Naive thymus-derived CD4-positive, alpha-beta T cell (primary cell): ENCODE measurements at regions of chr13 and their contacts with region 1.

Region 1: GRCh38 chr13:112443995-112444860 is 68.1 kb downstream of the SPACA7 start:
- DNase-seq: peak in 4 of 9 donors; percentile 5 to 67 (median 12)
- ATAC-seq: peak; percentile 48
- H3K4me3 ChIP-seq: no peak overlapping the region
- H3K4me3 Mint-ChIP-seq: no peak overlapping the region
- H3K27ac ChIP-seq: no peak overlapping the region
- H3K27ac Mint-ChIP-seq: no peak overlapping the region
- H3K4me1 ChIP-seq: no peaks in the 10 kb centered on the region
- H3K4me1 Mint-ChIP-seq: peaks cover 0 to 7% (median 0%) of the 10 kb centered on the region in 7 donors
- H3K27me3 ChIP-seq: no peaks in the 10 kb centered on the region
- H3K27me3 Mint-ChIP-seq: peaks cover 9 to 50% (median 32%) of the 10 kb centered on the region in 5 donors

Region 2: GRCh38 chr13:110455941-110456340 is 1988.3 kb before region 1 on chr13:
- CTCF ChIA-PET with region 1: no interaction called
- POLR2A ChIA-PET with region 1: no interaction called
- intact Hi-C with region 1: loop called in 1 of 2 experiments (anchors 10 kb)
- DNase-seq: peak; percentile 21 to 58 (median 44)
- ATAC-seq: peak; percentile 87
- H3K4me3 ChIP-seq: no peak overlapping the region
- H3K4me3 Mint-ChIP-seq: peak overlapping the region in 9 of 10 donors; percentile 3 to 74 (median 45)
- H3K27ac ChIP-seq: no peak overlapping the region
- H3K27ac Mint-ChIP-seq: no peak overlapping the region
- H3K4me1 ChIP-seq: no peaks in the 10 kb centered on the region
- H3K4me1 Mint-ChIP-seq: peaks cover 2 to 6% (median 5%) of the 10 kb centered on the region in 7 donors
- H3K27me3 ChIP-seq: no peaks in the 10 kb centered on the region
- H3K27me3 Mint-ChIP-seq: peaks cover 14 to 29% (median 19%) of the 10 kb centered on the region in 5 donors

Region 3: GRCh38 chr13:111474136-111475002 is 969.9 kb before region 1 on chr13:
- CTCF ChIA-PET with region 1: no interaction called
- POLR2A ChIA-PET with region 1: no interaction called
- intact Hi-C with region 1: loop called in 1 of 2 experiments (anchors 5 kb)
- DNase-seq: peak in 2 of 9 donors; percentile 5 to 12
- ATAC-seq: no peak
- H3K4me3 ChIP-seq: no peak overlapping the region
- H3K4me3 Mint-ChIP-seq: no peak overlapping the region
- H3K27ac ChIP-seq: no peak overlapping the region
- H3K27ac Mint-ChIP-seq: no peak overlapping the region
- H3K4me1 ChIP-seq: no peaks in the 10 kb centered on the region
- H3K4me1 Mint-ChIP-seq: no peaks in the 10 kb centered on the region
- H3K27me3 ChIP-seq: no peaks in the 10 kb centered on the region
- H3K27me3 Mint-ChIP-seq: peaks cover 0 to 9% (median 0%) of the 10 kb centered on the region in 5 donors

Region 4: GRCh38 chr13:112606109-112607001 is 162.1 kb after region 1 on chr13:
- CTCF ChIA-PET with region 1: no interaction called
- POLR2A ChIA-PET with region 1: no interaction called
- intact Hi-C with region 1: loop called in 1 of 2 experiments (anchors 1 kb)
- DNase-seq: peak; percentile 65 to 95 (median 77)
- ATAC-seq: peak; percentile 100
- H3K4me3 ChIP-seq: peak overlapping the region; percentile 51
- H3K4me3 Mint-ChIP-seq: peak overlapping the region; percentile 76 to 89 (median 86)
- H3K27ac ChIP-seq: no peak overlapping the region
- H3K27ac Mint-ChIP-seq: peak overlapping the region in 5 of 9 donors; percentile 3 to 43 (median 19)
- H3K4me1 ChIP-seq: no peaks in the 10 kb centered on the region
- H3K4me1 Mint-ChIP-seq: peaks cover 4 to 12% (median 10%) of the 10 kb centered on the region in 7 donors
- H3K27me3 ChIP-seq: no peaks in the 10 kb centered on the region
- H3K27me3 Mint-ChIP-seq: peaks cover 5 to 54% (median 23%) of the 10 kb centered on the region in 5 donors

Region 5: GRCh38 chr13:113029487-113030258 is 585.4 kb after region 1 on chr13:
- CTCF ChIA-PET with region 1: no interaction called
- POLR2A ChIA-PET with region 1: no interaction called
- intact Hi-C with region 1: no loop called
- DNase-seq: peak; percentile 4 to 58 (median 33)
- ATAC-seq: peak; percentile 61
- H3K4me3 ChIP-seq: no peak overlapping the region
- H3K4me3 Mint-ChIP-seq: no peak overlapping the region
- H3K27ac ChIP-seq: no peak overlapping the region
- H3K27ac Mint-ChIP-seq: no peak overlapping the region
- H3K4me1 ChIP-seq: no peaks in the 10 kb centered on the region
- H3K4me1 Mint-ChIP-seq: peaks cover 0 to 7% (median 0%) of the 10 kb centered on the region in 7 donors
- H3K27me3 ChIP-seq: no peaks in the 10 kb centered on the region
- H3K27me3 Mint-ChIP-seq: no peaks in the 10 kb centered on the region

Region 6: GRCh38 chr13:113122550-113123225 is 678.5 kb after region 1 on chr13 and contains the start of gene F10:
- CTCF ChIA-PET with region 1: no interaction called
- POLR2A ChIA-PET with region 1: no interaction called
- intact Hi-C with region 1: no loop called
- DNase-seq: no peak
- ATAC-seq: no peak
- H3K4me3 ChIP-seq: no peak within 1 kb of the TSS
- H3K4me3 Mint-ChIP-seq: no peak within 1 kb of the TSS
- H3K27ac ChIP-seq: no peak within 1 kb of the TSS
- H3K27ac Mint-ChIP-seq: no peak within 1 kb of the TSS
- H3K4me1 ChIP-seq: no peaks in the 10 kb centered on the region
- H3K4me1 Mint-ChIP-seq: peaks cover 0 to 6% (median 0%) of the 10 kb centered on the region in 7 donors
- H3K27me3 ChIP-seq: no peaks in the 10 kb centered on the region
- H3K27me3 Mint-ChIP-seq: peaks cover 12 to 23% (median 15%) of the 10 kb centered on the region in 5 donors
- total RNA-seq, gene F10: not detected